MCF 10A (cell line): ENCODE measurements at regions of chr5 and their contacts with region 1.

Region 1: DNA sequence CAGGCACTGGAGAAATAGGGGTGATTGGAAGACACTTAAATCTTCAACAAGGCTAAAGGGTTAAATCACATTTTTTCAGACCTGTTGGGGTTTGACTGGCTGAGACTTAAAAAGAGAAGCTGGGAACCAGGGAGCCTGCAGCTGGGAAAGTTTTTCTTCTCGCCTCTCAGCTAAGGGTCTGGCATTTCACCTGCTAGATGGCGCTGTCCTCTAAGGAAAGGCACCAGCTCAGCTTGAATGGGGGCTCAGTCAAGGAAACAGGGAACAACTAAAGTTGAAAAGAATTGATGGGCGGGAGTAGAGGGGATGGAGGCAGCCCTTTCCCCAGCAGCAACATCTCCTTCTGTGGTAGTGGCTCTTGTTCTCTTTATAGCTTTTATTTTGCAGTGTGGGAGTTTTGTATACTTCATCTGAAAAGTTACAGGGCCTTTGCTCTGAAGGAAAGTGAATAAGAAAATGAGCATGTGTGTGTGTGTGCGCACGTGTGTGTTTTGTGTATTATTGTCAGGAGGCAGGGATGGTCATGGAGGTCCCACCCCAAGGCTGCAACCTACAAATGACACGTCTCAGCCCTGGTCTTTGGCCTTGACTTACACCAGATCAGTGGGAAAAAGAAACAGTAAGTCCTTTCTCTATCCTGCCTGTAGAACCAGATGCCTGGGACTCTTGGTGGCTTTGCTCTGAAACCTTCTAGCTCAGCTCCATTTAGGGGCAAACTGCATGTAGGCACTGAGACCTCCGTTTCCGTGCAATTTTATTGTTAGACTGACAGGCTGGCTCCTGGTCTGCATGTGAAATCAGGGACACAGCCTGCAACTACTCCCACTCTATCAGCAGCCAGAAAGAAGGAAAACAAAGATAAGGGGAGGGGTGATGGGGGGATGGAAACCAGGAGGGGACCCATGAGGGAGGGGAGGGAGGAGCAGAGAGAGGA is 316.2 kb upstream of the CLINT1 start:
- DNase-seq: peak; percentile 84
- H3K4me3 Mint-ChIP-seq: no peak overlapping the region
- H3K27ac Mint-ChIP-seq: peak overlapping the region; percentile 1
- H3K4me1 Mint-ChIP-seq: peaks cover 7% of the 10 kb centered on the region
- H3K27me3 Mint-ChIP-seq: no peaks in the 10 kb centered on the region
- CTCF ChIP-seq: peak; percentile 98

Region 2: GRCh38 chr5:158013939-158014338 is 161.2 kb before region 1 on chr5:
- CTCF ChIA-PET with region 1: interaction called, 4 read pairs
- POLR2A ChIA-PET with region 1: no interaction called
- intact Hi-C with region 1: loop called (anchors 1 kb)
- DNase-seq: peak; percentile 64
- H3K4me3 Mint-ChIP-seq: no peak overlapping the region
- H3K27ac Mint-ChIP-seq: no peak overlapping the region
- H3K4me1 Mint-ChIP-seq: no peaks in the 10 kb centered on the region
- H3K27me3 Mint-ChIP-seq: no peaks in the 10 kb centered on the region
- CTCF ChIP-seq: peak; percentile 68

Region 3: DNA sequence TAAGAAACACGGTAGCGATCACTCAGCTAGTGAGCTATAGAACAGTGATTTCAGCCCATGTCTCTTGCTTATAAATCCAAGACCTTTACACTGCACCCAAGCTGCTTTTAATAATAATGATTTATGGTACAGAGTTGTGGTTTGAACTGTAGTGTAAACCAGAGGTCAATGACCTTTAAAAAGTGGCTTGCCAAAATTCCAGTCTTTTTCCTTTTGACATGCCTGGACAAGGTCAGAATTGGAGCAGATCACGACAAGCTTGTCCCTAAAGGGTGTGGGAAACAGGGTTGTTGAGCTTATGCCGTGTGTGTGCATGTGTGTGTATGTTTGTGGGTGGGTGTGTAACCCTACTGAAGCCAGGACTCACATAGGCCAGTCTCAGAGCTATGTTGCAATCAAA is 90.9 kb before region 1 on chr5:
- CTCF ChIA-PET with region 1: interaction called, 16 read pairs
- POLR2A ChIA-PET with region 1: interaction called, 5 read pairs
- intact Hi-C with region 1: no loop called
- DNase-seq: peak; percentile 74
- H3K4me3 Mint-ChIP-seq: no peak overlapping the region
- H3K27ac Mint-ChIP-seq: peak overlapping the region; percentile 1
- H3K4me1 Mint-ChIP-seq: peaks cover 22% of the 10 kb centered on the region
- H3K27me3 Mint-ChIP-seq: no peaks in the 10 kb centered on the region
- CTCF ChIP-seq: no peak

Region 4: DNA sequence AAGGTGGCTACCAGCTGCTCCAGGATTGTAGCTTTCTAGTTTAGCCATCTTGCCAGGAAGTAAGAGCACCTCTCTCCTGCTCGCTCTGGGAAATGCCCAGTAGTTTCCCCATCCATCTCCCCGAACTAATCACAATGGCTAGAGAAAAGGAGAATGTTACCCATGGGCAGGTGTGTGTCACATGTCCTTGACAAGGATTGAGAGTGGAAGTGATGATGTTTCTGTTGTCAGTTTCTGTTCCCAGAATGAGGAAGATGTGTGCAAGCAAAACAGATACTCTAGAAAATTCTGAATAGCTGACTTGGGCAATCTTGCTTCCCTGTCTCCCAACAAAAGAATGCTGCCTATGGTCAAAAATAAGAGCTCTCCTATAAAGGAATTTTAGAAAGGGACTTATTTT is 495.0 kb after region 1 on chr5:
- CTCF ChIA-PET with region 1: interaction called, 11 read pairs
- POLR2A ChIA-PET with region 1: no interaction called
- intact Hi-C with region 1: no loop called
- DNase-seq: no peak
- H3K4me3 Mint-ChIP-seq: no peak overlapping the region
- H3K27ac Mint-ChIP-seq: no peak overlapping the region
- H3K4me1 Mint-ChIP-seq: no peaks in the 10 kb centered on the region
- H3K27me3 Mint-ChIP-seq: peaks cover 19% of the 10 kb centered on the region
- CTCF ChIP-seq: no peak

Region 5: DNA sequence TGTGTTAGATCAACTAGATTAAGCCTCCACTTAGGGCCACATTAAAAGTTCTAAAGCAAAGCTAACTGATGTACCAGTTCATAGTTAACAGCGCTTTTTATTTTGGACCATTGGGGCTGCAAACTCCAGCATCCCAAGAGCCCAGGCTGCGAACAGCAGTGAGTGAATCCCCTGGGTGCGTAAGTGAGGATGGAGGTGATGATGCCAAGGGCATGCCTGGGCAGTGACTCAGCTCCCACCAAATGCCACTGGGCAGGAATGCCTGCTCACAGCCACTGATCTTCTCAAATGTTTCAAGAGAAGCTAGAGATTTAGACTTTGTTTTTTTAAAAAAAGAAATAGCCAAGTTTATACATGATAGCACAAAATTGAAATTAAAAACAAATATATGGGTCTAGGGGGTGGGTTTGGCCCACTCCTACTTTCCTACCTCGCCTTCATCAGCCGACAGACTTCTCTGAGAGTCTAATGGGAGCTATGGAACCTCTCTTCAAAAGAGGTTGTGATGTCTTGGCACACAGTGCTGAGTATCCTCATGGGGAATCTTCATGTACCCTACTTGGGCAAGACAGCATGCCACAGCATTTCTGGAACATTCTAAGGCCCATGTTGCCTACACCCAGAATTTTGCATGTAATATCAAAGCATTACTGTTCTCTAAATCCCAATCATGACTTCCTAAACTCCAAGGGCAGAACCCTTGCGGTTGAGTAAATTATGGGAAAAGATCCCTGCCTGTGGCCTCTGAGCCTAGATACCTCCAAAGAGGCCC is 526.4 kb after region 1 on chr5:
- CTCF ChIA-PET with region 1: interaction called, 166 read pairs
- POLR2A ChIA-PET with region 1: no interaction called
- intact Hi-C with region 1: no loop called
- DNase-seq: peak; percentile 82
- H3K4me3 Mint-ChIP-seq: no peak overlapping the region
- H3K27ac Mint-ChIP-seq: peak overlapping the region; percentile 12
- H3K4me1 Mint-ChIP-seq: peaks cover 23% of the 10 kb centered on the region
- H3K27me3 Mint-ChIP-seq: peaks cover 11% of the 10 kb centered on the region
- CTCF ChIP-seq: no peak

Region 6: DNA sequence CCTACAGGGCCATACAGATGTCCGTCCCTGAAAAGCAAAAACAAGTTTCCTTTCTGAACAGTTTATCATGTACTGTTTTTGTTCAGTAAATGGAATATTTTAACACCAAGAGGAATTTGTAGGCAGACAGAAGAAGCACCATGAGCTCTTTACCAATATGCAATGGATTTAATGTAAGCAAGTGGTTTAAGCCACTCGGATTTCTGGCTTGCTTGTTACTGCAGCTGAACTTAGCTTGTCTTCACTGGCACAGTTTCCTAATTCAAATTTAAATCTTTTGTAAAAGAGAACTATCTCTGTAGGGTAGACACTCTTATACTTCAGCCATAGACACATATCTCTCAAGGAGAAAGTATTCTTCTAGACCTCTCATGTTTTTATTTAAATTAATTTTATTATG is 937.3 kb after region 1 on chr5:
- CTCF ChIA-PET with region 1: interaction called, 155 read pairs
- POLR2A ChIA-PET with region 1: interaction called, 4 read pairs
- intact Hi-C with region 1: no loop called
- DNase-seq: no peak
- H3K4me3 Mint-ChIP-seq: no peak overlapping the region
- H3K27ac Mint-ChIP-seq: no peak overlapping the region
- H3K4me1 Mint-ChIP-seq: no peaks in the 10 kb centered on the region
- H3K27me3 Mint-ChIP-seq: peaks cover 66% of the 10 kb centered on the region
- CTCF ChIP-seq: no peak